Dendritic cell treated with granulocyte-macrophage colony-stimulating factor and Interleukin-4, amounts not matched to agents 40 ng/mL and 50 ng/mL, for 4 days (primary cell): ENCODE measurements at regions of chr20 and their contacts with region 1.

Region 1: GRCh38 chr20:5126512-5127203 is at the start of gene CDS2:
- H3K4me3 Mint-ChIP-seq: peak within 1 kb of the TSS; percentile 97
- H3K27ac Mint-ChIP-seq: peak within 1 kb of the TSS; percentile 96
- H3K4me1 Mint-ChIP-seq: peaks cover 47% of the 10 kb centered on the region
- H3K27me3 Mint-ChIP-seq: no peaks in the 10 kb centered on the region

Region 2: DNA sequence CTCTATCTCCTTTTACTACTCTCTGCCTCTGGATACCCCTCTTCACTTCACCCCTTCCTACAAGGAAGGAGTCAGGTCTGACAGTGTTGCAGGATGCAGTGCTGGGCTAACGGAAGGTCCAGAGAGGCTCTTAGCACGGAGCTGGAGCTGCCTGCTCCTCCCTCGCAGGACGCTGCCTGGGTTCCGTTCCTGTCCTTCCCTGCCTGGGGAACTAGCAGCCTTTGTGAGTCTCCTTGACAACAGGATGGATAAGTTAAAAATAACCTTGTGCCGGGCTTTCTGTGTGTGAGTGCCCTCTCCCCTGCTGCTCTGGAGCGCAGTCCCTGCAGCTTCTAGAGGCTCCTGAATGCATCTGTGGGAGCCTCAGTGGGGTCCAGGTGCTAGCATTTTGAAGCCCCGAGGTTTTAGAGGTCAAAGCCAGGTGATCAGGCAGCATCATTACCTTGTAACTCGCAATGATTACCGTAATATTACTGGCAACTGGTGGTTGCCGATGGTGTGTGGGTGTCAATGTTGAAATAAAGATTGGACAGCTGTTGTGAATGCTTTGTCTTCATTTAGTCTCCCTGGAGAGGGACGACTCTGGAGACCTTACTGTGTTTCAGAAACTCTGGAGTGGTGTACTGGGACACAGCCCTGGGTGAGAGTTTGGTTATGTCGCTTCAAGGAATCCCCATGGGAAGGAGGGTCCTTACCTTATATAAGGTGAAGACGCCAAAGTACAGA is 44.6 kb after region 1 on chr20:
- intact Hi-C with region 1: loop called (anchors 5 kb)
- H3K4me3 Mint-ChIP-seq: no peak overlapping the region
- H3K27ac Mint-ChIP-seq: peak overlapping the region; percentile 72
- H3K4me1 Mint-ChIP-seq: peaks cover 93% of the 10 kb centered on the region
- H3K27me3 Mint-ChIP-seq: no peaks in the 10 kb centered on the region

Region 3: DNA sequence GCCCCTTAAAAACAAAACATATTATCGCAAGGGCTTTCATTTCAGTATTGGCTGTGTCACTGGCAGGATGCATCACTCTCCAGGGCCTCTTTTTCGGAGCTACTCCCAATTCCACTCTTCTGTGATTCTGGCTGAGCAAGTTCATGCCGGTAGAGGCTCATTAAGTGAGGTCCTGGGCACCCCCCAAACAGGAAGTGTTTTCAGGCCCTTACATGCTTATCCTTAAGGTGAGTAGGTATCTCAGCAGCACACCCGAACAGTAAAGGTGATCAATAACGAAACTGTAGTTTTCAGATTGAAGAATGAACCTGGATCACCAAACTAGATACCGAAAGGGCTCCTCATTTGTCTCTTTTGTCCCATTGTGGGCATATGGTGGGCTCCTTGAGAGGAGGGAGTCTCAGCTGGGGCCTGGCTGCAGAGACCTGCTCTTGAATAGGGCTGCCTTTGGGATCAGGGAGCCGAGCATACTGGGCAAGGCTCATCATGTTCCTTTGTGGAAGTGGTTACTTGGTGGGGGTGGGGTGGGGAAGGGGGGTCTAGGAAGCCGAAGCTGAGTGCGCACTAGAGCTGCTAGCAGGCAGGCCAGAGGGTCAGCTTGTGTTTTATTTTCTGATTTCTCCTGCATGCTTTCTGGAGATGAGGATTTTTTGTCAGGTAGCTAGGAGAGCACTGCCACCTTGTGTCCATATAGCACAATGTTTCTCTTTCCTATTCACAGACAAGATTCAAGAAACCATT is 65.3 kb after region 1 on chr20:
- intact Hi-C with region 1: loop called (anchors 1 kb)
- H3K4me3 Mint-ChIP-seq: no peak overlapping the region
- H3K27ac Mint-ChIP-seq: peak overlapping the region; percentile 37
- H3K4me1 Mint-ChIP-seq: peaks cover 11% of the 10 kb centered on the region
- H3K27me3 Mint-ChIP-seq: no peaks in the 10 kb centered on the region